ENCODE measurements at regions of chr1 and their contacts with region 1.

Region 1: DNA sequence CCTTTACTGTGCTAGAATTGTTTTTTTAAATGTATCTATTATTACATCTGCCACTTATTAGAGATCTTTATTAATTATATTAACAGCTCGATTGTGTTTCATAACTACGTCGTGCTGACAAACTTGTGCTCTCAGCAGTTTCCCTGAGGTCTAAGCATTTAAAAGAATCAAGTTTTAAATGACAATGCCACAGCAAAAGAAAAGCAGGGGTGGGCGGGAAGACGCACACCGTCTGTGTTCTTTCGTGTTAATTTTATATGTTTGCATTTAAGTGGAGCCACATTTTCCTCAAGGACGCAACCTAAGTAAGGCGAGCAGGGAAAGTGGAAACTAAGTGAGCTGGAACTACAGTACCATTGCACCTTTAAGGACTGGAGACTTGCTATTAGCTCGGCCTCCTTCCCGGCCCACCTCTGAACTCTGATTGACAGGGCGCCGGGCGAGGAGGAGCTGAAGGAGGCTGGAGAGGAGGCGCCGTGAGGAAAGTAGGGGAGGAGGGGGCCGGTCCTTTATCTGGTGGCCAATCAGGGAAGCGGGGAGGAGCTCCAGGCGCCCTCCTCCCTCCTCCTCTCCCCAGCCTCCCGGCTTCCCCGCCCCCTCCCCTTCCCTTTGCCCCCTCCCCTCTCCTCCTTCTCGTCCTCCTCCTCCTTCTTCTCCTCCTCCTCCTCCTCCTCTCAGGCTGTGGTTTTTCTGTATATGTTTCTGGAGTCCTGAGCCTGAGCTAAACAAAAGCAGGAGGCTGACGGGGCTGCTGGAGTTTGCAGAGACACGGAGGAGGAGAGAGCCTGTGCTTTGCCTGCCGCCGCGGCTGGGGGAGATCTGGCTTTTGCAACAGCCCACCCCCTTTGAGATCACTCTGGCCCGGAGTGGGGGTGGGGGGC is at the start of gene PBX1:
- DNase-seq: peak; percentile 97 to 99 (median 98)
- ATAC-seq: peak; percentile 98 to 100 (median 99)
- H3K4me3 ChIP-seq: peak within 1 kb of the TSS; percentile 58 to 88 (median 73)
- H3K27ac ChIP-seq: peak within 1 kb of the TSS; percentile 58 to 87 (median 84)
- H3K4me1 ChIP-seq: peaks cover 0 to 13% (median 5%) of the 10 kb centered on the region in 12 donors
- H3K27me3 ChIP-seq: peaks cover 0 to 6% (median 0%) of the 10 kb centered on the region in 9 donors
- CTCF ChIP-seq: no peak
- POLR2A ChIP-seq: peak in 1 of 2 donors; percentile 91
- total RNA-seq, gene PBX1: 24.0 to 78.2 (median 59.8) TPM

Region 2: DNA sequence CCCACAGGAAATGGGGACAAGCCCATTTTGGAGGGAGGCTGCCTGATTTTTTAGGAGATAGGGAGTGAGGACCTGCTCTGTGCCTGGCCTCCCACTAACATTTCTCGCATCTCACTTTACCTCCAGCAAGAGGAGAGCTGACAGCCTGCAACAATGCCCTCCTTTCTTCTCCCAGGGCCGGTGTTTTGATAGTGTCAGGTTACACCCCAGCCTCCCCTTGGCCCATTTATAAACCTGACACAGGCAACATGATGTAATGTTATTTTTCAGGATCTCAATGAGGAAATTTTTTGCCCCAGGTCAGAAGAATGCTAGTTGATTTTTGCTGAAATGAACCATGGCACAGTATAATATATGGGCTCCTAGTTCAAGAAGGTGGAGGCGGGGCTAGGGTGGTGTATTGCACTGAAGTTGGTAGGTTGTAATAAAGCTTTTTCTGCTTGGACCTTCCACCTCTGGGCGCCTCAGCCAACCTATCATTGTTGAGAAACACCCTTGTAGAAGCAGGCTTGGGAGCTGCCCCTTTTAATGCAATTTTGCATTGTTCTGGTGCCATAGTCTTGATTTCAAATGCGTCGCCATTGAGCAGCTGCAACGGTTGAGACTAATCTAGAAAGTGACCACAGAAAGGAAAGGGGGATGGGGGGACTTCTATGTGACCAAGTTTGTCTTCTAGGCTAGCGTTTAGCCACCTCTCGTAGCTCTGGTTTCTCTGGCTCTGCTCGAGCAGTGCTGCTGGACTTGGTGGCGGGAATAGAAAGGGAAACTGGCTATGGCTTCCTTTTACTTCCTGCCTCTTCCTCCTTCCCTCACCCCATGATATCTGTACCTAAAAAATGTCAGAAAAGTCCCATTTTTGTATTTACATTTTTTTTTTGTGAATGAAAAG is 53.3 kb after region 1 on chr1:
- intact Hi-C with region 1: loop called in 5 of 10 experiments (anchors 5 to 10 kb)
- DNase-seq: peak in 1 of 5 donors; percentile 31
- ATAC-seq: peak; percentile 52 to 70 (median 64)
- H3K4me3 ChIP-seq: no peak overlapping the region
- H3K27ac ChIP-seq: peak overlapping the region in 10 of 12 donors; percentile 2 to 74 (median 50)
- H3K4me1 ChIP-seq: peaks cover 5 to 96% (median 61%) of the 10 kb centered on the region in 12 donors
- H3K27me3 ChIP-seq: no peaks in the 10 kb centered on the region
- CTCF ChIP-seq: no peak
- POLR2A ChIP-seq: no peak

Region 3: GRCh38 chr1:164707868-164708331 is 149.2 kb after region 1 on chr1:
- intact Hi-C with region 1: loop called in 3 of 10 experiments (anchors 5 to 10 kb)
- DNase-seq: peak in 2 of 5 donors; percentile 60 to 62
- ATAC-seq: peak; percentile 30 to 79 (median 44)
- H3K4me3 ChIP-seq: no peak overlapping the region
- H3K27ac ChIP-seq: peak overlapping the region in 11 of 12 donors; percentile 28 to 81 (median 60)
- H3K4me1 ChIP-seq: peaks cover 3 to 94% (median 70%) of the 10 kb centered on the region in 12 donors
- H3K27me3 ChIP-seq: no peaks in the 10 kb centered on the region
- CTCF ChIP-seq: no peak
- POLR2A ChIP-seq: no peak

Region 4: GRCh38 chr1:164726235-164726634 is 167.5 kb after region 1 on chr1:
- intact Hi-C with region 1: loop called in 1 of 10 experiments (anchors 10 kb)
- DNase-seq: no peak
- ATAC-seq: no peak
- H3K4me3 ChIP-seq: no peak overlapping the region
- H3K27ac ChIP-seq: no peak overlapping the region
- H3K4me1 ChIP-seq: peaks cover 2 to 61% (median 19%) of the 10 kb centered on the region in 12 donors
- H3K27me3 ChIP-seq: peaks cover 0 to 5% (median 0%) of the 10 kb centered on the region in 9 donors
- CTCF ChIP-seq: no peak
- POLR2A ChIP-seq: no peak

Region 5: GRCh38 chr1:164780863-164781262 is 222.2 kb after region 1 on chr1:
- intact Hi-C with region 1: loop called in 9 of 10 experiments (anchors 2 to 10 kb)
- DNase-seq: peak in 2 of 5 donors; percentile 63 to 73
- ATAC-seq: peak; percentile 76 to 92 (median 86)
- H3K4me3 ChIP-seq: no peak overlapping the region
- H3K27ac ChIP-seq: peak overlapping the region in 11 of 12 donors; percentile 27 to 80 (median 61)
- H3K4me1 ChIP-seq: peaks cover 0 to 83% (median 43%) of the 10 kb centered on the region in 12 donors
- H3K27me3 ChIP-seq: no peaks in the 10 kb centered on the region
- CTCF ChIP-seq: no peak
- POLR2A ChIP-seq: peak in 1 of 2 donors; percentile 23

Region 6: GRCh38 chr1:164953098-164953497 is 394.4 kb after region 1 on chr1:
- intact Hi-C with region 1: no loop called
- DNase-seq: no peak
- ATAC-seq: peak in 1 of 4 donors; percentile 23
- H3K4me3 ChIP-seq: no peak overlapping the region
- H3K27ac ChIP-seq: no peak overlapping the region
- H3K4me1 ChIP-seq: peaks cover 0 to 38% (median 8%) of the 10 kb centered on the region in 12 donors
- H3K27me3 ChIP-seq: no peaks in the 10 kb centered on the region
- CTCF ChIP-seq: peak in 8 of 12 donors; percentile 9 to 47 (median 30)
- POLR2A ChIP-seq: no peak